Breast epithelium (tissue), 4 donors: ENCODE measurements at regions of chrX and their contacts with region 1.

Region 1: DNA sequence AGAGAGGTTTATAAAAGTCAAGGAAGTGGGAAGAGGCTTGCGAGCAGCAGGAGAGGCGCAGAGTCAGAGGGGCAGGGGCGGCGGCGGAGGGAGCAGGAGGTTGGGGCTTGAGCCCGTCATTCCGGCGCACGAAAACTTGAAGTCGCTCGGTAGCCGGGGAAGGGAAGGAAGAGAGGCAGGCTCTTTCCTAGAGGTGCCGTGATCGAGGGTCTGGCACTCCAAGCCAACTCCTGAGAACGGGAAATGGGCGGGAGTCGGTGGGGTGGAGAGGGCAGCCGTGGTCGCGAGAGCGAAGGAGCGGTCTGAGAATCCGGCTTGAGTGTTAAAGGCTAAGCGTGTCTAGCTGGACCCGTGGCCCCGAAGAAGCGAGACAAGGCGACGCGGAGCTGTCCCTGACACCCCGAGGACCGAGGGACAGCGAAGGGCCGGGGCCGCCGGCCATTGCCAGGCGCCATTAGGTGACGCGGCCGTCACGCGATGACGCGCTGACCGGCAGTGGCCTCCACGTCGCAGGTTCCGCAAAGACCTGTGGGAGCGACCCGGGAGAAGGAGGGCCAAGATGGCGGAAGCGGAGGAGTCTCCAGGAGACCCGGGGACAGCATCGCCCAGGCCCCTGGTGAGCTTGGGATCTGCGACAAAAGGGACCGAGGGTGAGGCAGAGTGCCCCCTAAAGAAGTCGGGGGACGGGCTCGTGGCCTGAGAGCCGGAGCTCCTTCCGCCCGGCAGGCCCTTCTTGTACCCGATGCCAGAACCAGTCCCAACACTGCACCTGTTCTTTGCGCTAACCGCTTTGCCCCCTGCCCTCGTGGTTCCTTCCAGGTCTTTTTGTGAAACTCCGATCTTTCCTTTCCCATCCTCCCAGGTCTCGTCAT is at the start of gene YIPF6:
- DNase-seq: peak; percentile 66 to 81
- H3K4me3 ChIP-seq: peak within 1 kb of the TSS; percentile 60 to 67 (median 62)
- H3K27ac ChIP-seq: peak within 1 kb of the TSS; percentile 93 to 95
- H3K4me1 ChIP-seq: peaks cover 0 to 5% of the 10 kb centered on the region in 2 donors
- H3K27me3 ChIP-seq: peaks cover 0 to 40% of the 10 kb centered on the region in 2 donors
- CTCF ChIP-seq: no peak
- POLR2A ChIP-seq: peak; percentile 76
- total RNA-seq, gene YIPF6: 25.3 to 27.9 (median 27.2) TPM

Region 2: GRCh38 chrX:68139791-68140190 is 359.0 kb before region 1 on chrX:
- intact Hi-C with region 1: no loop called
- DNase-seq: no peak
- H3K4me3 ChIP-seq: no peak overlapping the region
- H3K27ac ChIP-seq: no peak overlapping the region
- H3K4me1 ChIP-seq: no peaks in the 10 kb centered on the region
- H3K27me3 ChIP-seq: peaks cover 0 to 19% of the 10 kb centered on the region in 2 donors
- CTCF ChIP-seq: no peak
- POLR2A ChIP-seq: no peak

Region 3: GRCh38 chrX:68710870-68711576 is 212.3 kb after region 1 on chrX:
- intact Hi-C with region 1: loop called (anchors 5 kb)
- DNase-seq: no peak
- H3K4me3 ChIP-seq: no peak overlapping the region
- H3K27ac ChIP-seq: no peak overlapping the region
- H3K4me1 ChIP-seq: no peaks in the 10 kb centered on the region
- H3K27me3 ChIP-seq: peaks cover 0 to 43% of the 10 kb centered on the region in 2 donors
- CTCF ChIP-seq: peak in 2 of 3 donors; percentile 39 to 59
- POLR2A ChIP-seq: no peak